WTC11 (cell line): ENCODE measurements at regions of chr3 and their contacts with region 1.

Region 1: GRCh38 chr3:186617038-186617946 is 4.4 kb downstream of the AHSG start:
- DNase-seq: peak; percentile 82
- ATAC-seq: peak; percentile 95
- H3K4me3 Mint-ChIP-seq: peak overlapping the region; percentile 58
- H3K27ac Mint-ChIP-seq: no peak overlapping the region
- H3K4me1 Mint-ChIP-seq: peaks cover 18% of the 10 kb centered on the region
- H3K27me3 Mint-ChIP-seq: peaks cover 25% of the 10 kb centered on the region
- CTCF ChIP-seq: peak; percentile 86

Region 2: GRCh38 chr3:186464424-186465093 is 152.7 kb before region 1 on chr3:
- CTCF ChIA-PET with region 1: no interaction called
- POLR2A ChIA-PET with region 1: no interaction called
- DNase-seq: no peak
- ATAC-seq: peak; percentile 98
- H3K4me3 Mint-ChIP-seq: no peak overlapping the region
- H3K27ac Mint-ChIP-seq: no peak overlapping the region
- H3K4me1 Mint-ChIP-seq: no peaks in the 10 kb centered on the region
- H3K27me3 Mint-ChIP-seq: no peaks in the 10 kb centered on the region
- CTCF ChIP-seq: 0 out of 2 replicates have a peak, but pooled peaks have one; percentile 23

Region 3: GRCh38 chr3:186514296-186515002 is 102.8 kb before region 1 on chr3:
- CTCF ChIA-PET with region 1: no interaction called
- POLR2A ChIA-PET with region 1: no interaction called
- DNase-seq: peak; percentile 35
- ATAC-seq: peak; percentile 85
- H3K4me3 Mint-ChIP-seq: no peak overlapping the region
- H3K27ac Mint-ChIP-seq: no peak overlapping the region
- H3K4me1 Mint-ChIP-seq: peaks cover 5% of the 10 kb centered on the region; the same call in 1 of the 2 replicates
- H3K27me3 Mint-ChIP-seq: peaks cover 2% of the 10 kb centered on the region
- CTCF ChIP-seq: peak; percentile 67

Region 4: DNA sequence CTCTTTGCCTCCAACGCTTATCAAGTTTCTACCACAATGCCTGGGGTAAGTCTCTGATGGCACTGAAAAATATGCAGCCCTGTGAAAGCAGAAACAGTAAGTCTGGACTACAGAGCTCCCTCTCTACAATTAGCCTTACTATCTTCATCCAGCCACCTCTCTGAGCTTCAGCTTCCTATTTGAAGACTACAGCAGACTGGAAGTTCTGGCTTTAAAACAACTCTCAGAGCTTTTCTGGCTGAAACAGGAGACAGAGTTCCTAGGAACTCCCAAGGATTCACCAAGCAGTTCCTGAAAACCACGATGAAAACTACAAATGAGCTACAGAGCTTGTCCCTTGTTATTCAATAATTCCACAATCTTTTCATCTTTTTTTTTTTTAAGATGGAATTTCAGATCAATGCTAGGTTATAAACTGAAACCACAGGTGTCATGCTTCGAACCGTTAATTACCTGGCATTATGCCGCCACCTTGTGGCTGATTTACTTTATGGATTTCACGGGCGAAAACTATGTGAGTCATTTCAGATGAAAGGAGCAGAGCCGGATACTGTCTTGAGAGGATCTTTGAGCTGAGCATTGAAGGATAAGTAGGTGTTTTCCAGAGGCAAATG is 77.0 kb before region 1 on chr3:
- CTCF ChIA-PET with region 1: interaction called, 12 read pairs
- POLR2A ChIA-PET with region 1: no interaction called
- DNase-seq: peak; percentile 75
- ATAC-seq: peak; percentile 86
- H3K4me3 Mint-ChIP-seq: no peak overlapping the region
- H3K27ac Mint-ChIP-seq: peak overlapping the region; percentile 22
- H3K4me1 Mint-ChIP-seq: peaks cover 6% of the 10 kb centered on the region
- H3K27me3 Mint-ChIP-seq: no peaks in the 10 kb centered on the region
- CTCF ChIP-seq: peak; percentile 40; the same call in 1 of the 2 replicates

Region 5: GRCh38 chr3:186589121-186589520 is 28.2 kb before region 1 on chr3:
- CTCF ChIA-PET with region 1: interaction called, 21 read pairs
- POLR2A ChIA-PET with region 1: interaction called, 4 read pairs
- DNase-seq: no peak
- ATAC-seq: 0 out of 2 replicates have a peak, but pooled peaks have one; percentile 30
- H3K4me3 Mint-ChIP-seq: no peak overlapping the region
- H3K27ac Mint-ChIP-seq: no peak overlapping the region
- H3K4me1 Mint-ChIP-seq: no peaks in the 10 kb centered on the region
- H3K27me3 Mint-ChIP-seq: no peaks in the 10 kb centered on the region
- CTCF ChIP-seq: no peak

Region 6: DNA sequence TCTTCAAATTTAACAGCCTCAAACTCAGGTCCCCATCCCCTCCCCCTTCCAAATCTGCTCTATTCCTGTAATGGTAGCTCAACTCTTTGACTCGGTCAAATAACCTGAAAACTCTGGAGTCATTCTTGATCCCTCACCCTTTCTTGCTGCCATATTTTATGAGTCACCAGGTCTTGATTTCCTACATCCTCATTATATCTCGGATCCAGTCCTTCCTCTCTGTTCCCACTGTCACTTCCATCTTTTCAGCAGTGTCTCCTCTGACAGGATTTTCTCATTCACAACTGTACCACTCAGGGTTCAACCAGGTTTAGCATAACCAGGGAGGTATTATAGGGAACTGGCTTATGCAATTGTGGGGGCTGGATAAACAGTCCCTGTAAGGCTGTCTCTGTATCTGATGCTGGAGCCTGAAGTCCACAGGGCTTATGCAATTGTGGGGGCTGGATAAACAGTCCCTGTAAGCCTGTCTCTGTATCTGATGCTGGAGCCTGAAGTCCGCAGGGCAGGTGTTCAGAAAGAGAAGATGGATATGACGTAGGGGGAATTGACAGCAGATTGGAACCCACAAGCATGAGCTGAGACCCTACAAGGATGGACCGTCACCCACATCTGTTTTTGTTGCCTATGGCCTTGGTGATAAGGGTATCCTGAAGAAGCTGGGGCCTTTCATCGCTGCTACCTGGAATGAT is 13.8 kb after region 1 on chr3:
- CTCF ChIA-PET with region 1: interaction called, 18 read pairs
- POLR2A ChIA-PET with region 1: interaction called, 3 read pairs
- DNase-seq: no peak
- ATAC-seq: no peak
- H3K4me3 Mint-ChIP-seq: no peak overlapping the region
- H3K27ac Mint-ChIP-seq: no peak overlapping the region
- H3K4me1 Mint-ChIP-seq: peaks cover 7% of the 10 kb centered on the region; the same call in 1 of the 2 replicates
- H3K27me3 Mint-ChIP-seq: peaks cover 2% of the 10 kb centered on the region; the same call in 1 of the 2 replicates
- CTCF ChIP-seq: no peak

Region 7: DNA sequence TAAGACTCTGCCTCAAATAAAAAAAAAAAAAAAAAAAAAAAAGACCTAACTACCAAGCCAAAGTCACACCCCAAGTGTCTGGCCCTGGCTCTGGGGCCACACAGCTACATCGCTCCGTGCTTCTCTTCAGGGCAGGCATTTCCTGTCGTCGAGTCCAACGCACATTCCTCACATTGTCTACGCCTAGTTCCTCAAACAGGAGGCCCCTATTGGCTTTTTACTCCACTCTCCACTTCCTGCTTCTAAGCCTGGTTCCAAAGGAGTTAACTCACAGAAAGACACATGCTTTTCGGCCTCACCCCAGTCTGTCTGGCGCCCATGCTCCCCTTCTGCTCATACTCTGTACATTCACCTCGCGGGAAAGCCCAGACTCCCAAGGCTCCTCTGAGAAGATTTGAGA is 128.7 kb after region 1 on chr3:
- CTCF ChIA-PET with region 1: interaction called, 81 read pairs
- POLR2A ChIA-PET with region 1: no interaction called
- DNase-seq: peak; percentile 35
- ATAC-seq: peak; percentile 99
- H3K4me3 Mint-ChIP-seq: no peak overlapping the region
- H3K27ac Mint-ChIP-seq: peak overlapping the region; percentile 38
- H3K4me1 Mint-ChIP-seq: peaks cover 13% of the 10 kb centered on the region
- H3K27me3 Mint-ChIP-seq: no peaks in the 10 kb centered on the region
- CTCF ChIP-seq: no peak

Region 8: DNA sequence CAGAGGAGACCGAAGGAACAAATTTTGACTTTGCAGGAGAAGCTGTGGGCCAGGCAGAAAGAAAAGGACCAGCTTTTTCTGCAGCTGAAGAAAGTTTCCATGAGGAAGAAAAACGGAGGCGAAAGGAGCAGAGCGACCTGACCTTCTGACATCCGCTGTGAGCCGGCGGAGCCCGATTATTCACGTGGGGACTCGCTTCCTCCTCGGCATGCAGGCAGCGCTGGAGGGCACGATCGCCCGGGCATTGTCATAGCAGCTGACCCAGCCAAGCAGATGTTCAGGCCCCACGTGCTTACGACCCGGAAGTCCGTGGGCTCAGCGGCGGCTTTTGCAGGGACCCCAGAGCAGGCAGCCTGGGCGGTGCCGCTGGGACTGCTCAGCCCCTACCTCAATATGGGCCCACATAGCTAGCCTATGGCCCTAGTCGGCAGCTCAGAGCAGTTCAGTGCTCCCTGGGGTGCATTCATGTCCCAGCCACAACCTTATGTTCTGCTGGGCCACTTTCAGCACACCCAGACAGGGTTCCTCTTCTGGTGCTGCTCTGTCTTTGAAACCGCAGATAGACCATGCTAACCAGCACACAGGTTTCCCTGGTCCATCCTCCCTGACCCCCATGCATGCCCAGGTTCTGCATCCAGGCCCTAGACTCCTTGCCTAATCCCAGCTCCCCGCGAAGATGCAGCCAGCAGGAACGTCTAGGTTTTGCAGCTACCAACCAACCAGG is 155.6 kb after region 1 on chr3:
- CTCF ChIA-PET with region 1: interaction called, 7 read pairs
- POLR2A ChIA-PET with region 1: interaction called, 11 read pairs
- DNase-seq: peak; percentile 40
- ATAC-seq: peak; percentile 44
- H3K4me3 Mint-ChIP-seq: peak overlapping the region; percentile 57
- H3K27ac Mint-ChIP-seq: no peak overlapping the region
- H3K4me1 Mint-ChIP-seq: peaks cover 26% of the 10 kb centered on the region
- H3K27me3 Mint-ChIP-seq: peaks cover 32% of the 10 kb centered on the region
- CTCF ChIP-seq: no peak

Region 9: GRCh38 chr3:186821429-186822367 is 204.4 kb after region 1 on chr3:
- CTCF ChIA-PET with region 1: interaction called, 10 read pairs
- POLR2A ChIA-PET with region 1: no interaction called
- DNase-seq: no peak
- ATAC-seq: no peak
- H3K4me3 Mint-ChIP-seq: no peak overlapping the region
- H3K27ac Mint-ChIP-seq: no peak overlapping the region; the same call in 1 of the 2 replicates
- H3K4me1 Mint-ChIP-seq: peaks cover 28% of the 10 kb centered on the region
- H3K27me3 Mint-ChIP-seq: peaks cover 13% of the 10 kb centered on the region
- CTCF ChIP-seq: peak; percentile 47